Mammary epithelial cell (primary cell): ENCODE measurements at regions of chr11 and their contacts with region 1.

Region 1: DNA sequence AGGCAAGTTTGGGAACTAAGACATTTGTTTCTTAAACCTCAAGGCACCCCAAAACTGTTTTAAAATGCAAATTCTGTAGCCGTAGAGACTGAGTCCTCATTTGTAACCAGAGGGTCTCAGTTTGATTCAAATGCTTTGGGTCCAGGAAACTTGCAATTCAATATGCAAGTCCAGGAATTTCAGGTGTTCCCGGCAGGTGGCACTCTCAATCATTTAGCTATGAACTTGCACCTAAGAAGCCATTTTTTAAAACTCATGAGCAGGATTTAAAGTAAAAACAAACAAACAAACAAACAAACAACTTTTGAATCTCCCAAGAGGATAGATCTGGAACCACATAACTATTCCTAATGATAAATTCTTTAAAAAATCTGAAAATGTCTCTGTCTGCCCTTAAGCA is 8.7 kb upstream of the ABTB2 start:
- DNase-seq: no peak
- H3K4me3 ChIP-seq: no peak overlapping the region
- H3K27ac ChIP-seq: no peak overlapping the region
- H3K4me1 ChIP-seq: peaks cover 5% of the 10 kb centered on the region
- H3K27me3 ChIP-seq: no peaks in the 10 kb centered on the region
- CTCF ChIP-seq: peak; percentile 53 to 69

Region 2: GRCh38 chr11:34468209-34468841 is 101.8 kb after region 1 on chr11:
- CTCF ChIA-PET with region 1: interaction called, 4 read pairs
- dilution Hi-C with region 1: no loop called
- in situ Hi-C with region 1: no loop called
- intact Hi-C with region 1: loop called (anchors 1 kb)
- DNase-seq: peak; percentile 19
- H3K4me3 ChIP-seq: no peak overlapping the region
- H3K27ac ChIP-seq: no peak overlapping the region
- H3K4me1 ChIP-seq: no peaks in the 10 kb centered on the region
- H3K27me3 ChIP-seq: no peaks in the 10 kb centered on the region
- CTCF ChIP-seq: peak; percentile 85 to 91

Region 3: GRCh38 chr11:34492806-34493414 is 126.4 kb after region 1 on chr11:
- CTCF ChIA-PET with region 1: interaction called, 3 read pairs
- dilution Hi-C with region 1: no loop called
- in situ Hi-C with region 1: loop called (anchors 10 kb)
- intact Hi-C with region 1: loop called (anchors 1 kb)
- DNase-seq: peak; percentile 47
- H3K4me3 ChIP-seq: no peak overlapping the region
- H3K27ac ChIP-seq: no peak overlapping the region
- H3K4me1 ChIP-seq: no peaks in the 10 kb centered on the region
- H3K27me3 ChIP-seq: no peaks in the 10 kb centered on the region
- CTCF ChIP-seq: peak; percentile 63 to 71